ENCODE measurements at regions of chrX and their contacts with region 1.

Region 1: GRCh38 chrX:24169211-24169610 is 19.7 kb downstream of the ZFX start:
- DNase-seq: peak; percentile 14
- H3K4me3 Mint-ChIP-seq: peak overlapping the region; percentile 6
- H3K27ac Mint-ChIP-seq: peak overlapping the region; percentile 84
- H3K4me1 Mint-ChIP-seq: peaks cover 62% of the 10 kb centered on the region
- H3K27me3 Mint-ChIP-seq: no peaks in the 10 kb centered on the region

Region 2: DNA sequence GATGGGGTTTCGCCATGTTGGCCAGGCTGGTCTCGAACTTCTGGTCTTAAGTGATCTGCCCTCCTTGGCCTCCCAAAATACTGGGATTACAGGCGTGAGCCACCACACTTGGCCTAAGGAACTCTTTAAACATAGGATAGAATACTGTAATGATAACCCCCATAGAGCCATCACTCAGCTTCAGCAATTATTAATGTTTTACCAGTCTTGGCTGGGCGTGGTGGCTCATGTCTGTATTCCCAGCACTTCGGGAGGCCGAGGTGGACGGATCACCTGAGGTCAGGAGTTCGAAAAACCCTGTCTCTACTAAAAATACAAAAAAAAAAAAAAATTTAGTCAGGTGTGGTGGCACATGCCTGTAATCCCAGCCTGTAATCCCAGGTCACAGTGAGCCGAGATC is 99.3 kb before region 1 on chrX:
- CTCF ChIA-PET with region 1: no interaction called
- intact Hi-C with region 1: no loop called
- DNase-seq: no peak
- H3K4me3 Mint-ChIP-seq: no peak overlapping the region
- H3K27ac Mint-ChIP-seq: no peak overlapping the region
- H3K4me1 Mint-ChIP-seq: peaks cover 3% of the 10 kb centered on the region
- H3K27me3 Mint-ChIP-seq: no peaks in the 10 kb centered on the region

Region 3: GRCh38 chrX:24241822-24242648 is 72.8 kb after region 1 on chrX:
- CTCF ChIA-PET with region 1: no interaction called
- intact Hi-C with region 1: loop called (anchors 2 kb)
- DNase-seq: peak; percentile 12
- H3K4me3 Mint-ChIP-seq: no peak overlapping the region
- H3K27ac Mint-ChIP-seq: no peak overlapping the region
- H3K4me1 Mint-ChIP-seq: peaks cover 11% of the 10 kb centered on the region
- H3K27me3 Mint-ChIP-seq: no peaks in the 10 kb centered on the region